ENCODE measurements at regions of chr1 and their contacts with region 1.

Region 1: GRCh38 chr1:69737527-69738185 is 169.9 kb downstream of the LRRC7 start:
- H3K4me3 Mint-ChIP-seq: no peak overlapping the region
- H3K27ac Mint-ChIP-seq: no peak overlapping the region
- H3K4me1 Mint-ChIP-seq: no peaks in the 10 kb centered on the region
- H3K27me3 Mint-ChIP-seq: no peaks in the 10 kb centered on the region

Region 2: DNA sequence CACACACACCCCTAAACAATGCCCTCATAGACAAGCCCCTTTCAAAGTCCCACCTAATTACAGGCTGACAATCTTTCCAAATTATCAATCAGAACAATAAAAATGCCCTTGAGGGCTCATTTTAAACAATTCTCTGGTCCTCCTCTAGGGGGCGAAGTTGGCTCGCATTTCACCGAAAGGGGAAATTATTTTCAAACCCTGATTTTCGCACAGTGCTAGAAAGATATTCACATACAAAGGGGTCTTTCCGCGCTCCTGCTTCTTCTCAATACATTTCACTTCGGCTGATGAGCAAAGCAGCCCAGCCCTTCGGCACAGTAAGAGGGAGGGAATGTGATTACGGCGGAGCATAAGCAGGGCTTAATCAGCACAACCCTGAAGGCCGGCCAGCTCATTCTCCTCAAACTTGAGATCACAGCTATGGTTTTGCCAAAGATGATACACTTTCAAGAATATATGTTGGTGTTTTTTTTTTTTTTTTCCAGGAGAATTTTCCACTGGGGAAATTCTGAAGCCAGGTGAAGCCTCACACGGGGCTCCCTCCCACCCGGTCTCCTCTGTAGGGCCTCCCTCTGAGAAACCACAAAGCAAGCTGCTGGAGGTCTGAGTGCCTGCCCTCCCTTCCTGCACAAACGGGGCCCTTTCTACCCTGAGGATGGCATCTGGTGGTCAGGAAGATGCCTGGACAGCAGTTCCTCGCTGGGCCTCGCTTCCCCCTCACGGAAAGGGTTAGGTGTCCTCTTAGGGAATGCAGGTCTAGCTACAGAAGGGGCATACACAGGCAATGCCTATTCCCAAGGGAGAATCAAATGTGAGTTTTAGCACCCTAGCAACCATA is 1971.3 kb before region 1 on chr1:
- intact Hi-C with region 1: loop called (anchors 5 kb)
- H3K4me3 Mint-ChIP-seq: peak overlapping the region; percentile 47
- H3K27ac Mint-ChIP-seq: no peak overlapping the region
- H3K4me1 Mint-ChIP-seq: peaks cover 11% of the 10 kb centered on the region
- H3K27me3 Mint-ChIP-seq: peaks cover 28% of the 10 kb centered on the region

Region 3: GRCh38 chr1:67853704-67854103 is 1884.0 kb before region 1 on chr1:
- intact Hi-C with region 1: loop called (anchors 2 kb)
- H3K4me3 Mint-ChIP-seq: no peak overlapping the region
- H3K27ac Mint-ChIP-seq: no peak overlapping the region
- H3K4me1 Mint-ChIP-seq: peaks cover 5% of the 10 kb centered on the region
- H3K27me3 Mint-ChIP-seq: peaks cover 11% of the 10 kb centered on the region

Region 4: DNA sequence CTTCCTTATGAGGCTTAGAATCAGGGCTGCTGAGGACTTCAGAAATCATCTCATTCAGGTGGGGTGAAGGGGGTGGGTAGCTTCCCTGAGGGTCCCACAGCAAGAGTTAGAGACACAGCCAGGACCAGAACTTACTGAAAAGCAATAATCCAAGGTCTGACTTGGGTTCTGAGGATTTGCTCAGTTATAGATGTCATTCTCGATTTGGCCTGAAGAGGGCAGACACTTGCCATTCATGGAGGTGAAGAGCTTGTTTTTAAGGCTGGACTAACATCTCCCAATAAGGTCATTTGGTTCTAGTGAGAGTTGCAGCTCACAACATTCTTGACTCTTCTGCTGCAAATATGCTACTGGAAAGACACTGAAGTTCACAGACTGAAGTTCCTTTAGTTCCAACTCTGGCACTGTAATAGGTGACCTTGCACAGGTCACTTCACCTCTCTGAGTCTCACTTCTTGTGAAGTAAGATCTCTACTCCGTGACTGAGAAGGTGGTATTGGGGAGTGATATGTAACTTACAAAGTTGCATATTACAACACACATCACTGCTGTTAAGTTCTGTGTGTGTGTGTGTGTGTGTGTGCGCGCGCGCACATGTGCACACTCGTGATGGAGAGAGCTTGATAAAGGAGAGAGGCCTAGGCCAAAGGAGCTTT is 1617.4 kb before region 1 on chr1:
- intact Hi-C with region 1: loop called (anchors 1 kb)
- H3K4me3 Mint-ChIP-seq: no peak overlapping the region
- H3K27ac Mint-ChIP-seq: no peak overlapping the region
- H3K4me1 Mint-ChIP-seq: peaks cover 7% of the 10 kb centered on the region
- H3K27me3 Mint-ChIP-seq: no peaks in the 10 kb centered on the region

Region 5: DNA sequence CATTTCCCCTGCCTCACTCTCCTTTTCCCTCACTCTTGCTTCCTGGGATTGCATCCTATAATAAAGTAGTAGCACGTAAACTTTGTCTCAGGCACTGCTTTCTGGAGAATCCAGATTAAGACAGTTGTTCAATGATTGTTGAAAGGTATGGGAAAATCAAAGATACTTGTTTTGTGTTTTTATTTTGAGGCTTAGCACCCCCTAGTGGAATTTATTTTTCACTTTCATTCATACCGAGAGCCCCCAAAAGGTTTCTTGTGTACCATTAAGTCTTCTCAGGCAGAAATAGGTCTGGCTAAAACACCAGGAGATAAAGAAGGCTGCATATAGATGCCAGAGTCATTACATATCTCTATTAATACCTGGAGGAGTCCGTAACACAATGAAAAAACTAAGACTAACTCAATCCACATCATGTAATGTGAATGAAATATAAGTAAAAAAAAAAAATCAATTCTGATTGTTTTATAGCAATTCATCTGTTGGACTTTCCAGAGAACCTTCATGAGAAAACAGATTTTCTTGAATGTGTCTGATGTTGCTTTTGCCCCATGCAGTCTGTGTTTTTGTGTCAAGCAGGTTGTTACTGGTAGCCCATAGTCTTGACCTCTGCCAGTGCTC is 1391.4 kb before region 1 on chr1:
- intact Hi-C with region 1: loop called (anchors 10 kb)
- H3K4me3 Mint-ChIP-seq: no peak overlapping the region
- H3K27ac Mint-ChIP-seq: no peak overlapping the region
- H3K4me1 Mint-ChIP-seq: peaks cover 29% of the 10 kb centered on the region
- H3K27me3 Mint-ChIP-seq: no peaks in the 10 kb centered on the region

Region 6: GRCh38 chr1:68600049-68600661 is 1137.5 kb before region 1 on chr1:
- intact Hi-C with region 1: loop called (anchors 5 kb)
- H3K4me3 Mint-ChIP-seq: no peak overlapping the region
- H3K27ac Mint-ChIP-seq: no peak overlapping the region
- H3K4me1 Mint-ChIP-seq: no peaks in the 10 kb centered on the region
- H3K27me3 Mint-ChIP-seq: no peaks in the 10 kb centered on the region

Region 7: GRCh38 chr1:69648486-69648885 is 89.2 kb before region 1 on chr1:
- intact Hi-C with region 1: no loop called
- H3K4me3 Mint-ChIP-seq: no peak overlapping the region
- H3K27ac Mint-ChIP-seq: no peak overlapping the region
- H3K4me1 Mint-ChIP-seq: no peaks in the 10 kb centered on the region
- H3K27me3 Mint-ChIP-seq: no peaks in the 10 kb centered on the region

Region 8: DNA sequence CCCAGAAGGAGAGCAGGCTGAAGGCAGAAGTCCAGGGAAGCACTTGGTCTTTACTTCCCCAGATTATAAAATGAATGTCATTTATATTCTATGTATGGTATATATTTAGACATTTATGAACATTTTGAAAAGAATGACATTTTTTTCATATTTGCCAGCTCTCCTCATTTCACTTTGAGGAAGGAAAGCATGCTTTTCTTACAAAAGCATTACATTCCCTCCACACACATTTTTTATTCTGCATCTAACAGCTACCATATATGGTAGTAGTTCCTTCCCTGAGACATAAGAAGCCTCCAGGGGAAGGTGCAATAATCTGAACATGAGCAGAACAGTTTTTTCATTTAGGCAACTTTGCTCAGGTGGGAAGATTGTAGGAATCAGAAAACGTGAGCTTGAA is 76.0 kb before region 1 on chr1:
- intact Hi-C with region 1: no loop called
- H3K4me3 Mint-ChIP-seq: no peak overlapping the region
- H3K27ac Mint-ChIP-seq: no peak overlapping the region
- H3K4me1 Mint-ChIP-seq: peaks cover 7% of the 10 kb centered on the region
- H3K27me3 Mint-ChIP-seq: no peaks in the 10 kb centered on the region

Region 9: DNA sequence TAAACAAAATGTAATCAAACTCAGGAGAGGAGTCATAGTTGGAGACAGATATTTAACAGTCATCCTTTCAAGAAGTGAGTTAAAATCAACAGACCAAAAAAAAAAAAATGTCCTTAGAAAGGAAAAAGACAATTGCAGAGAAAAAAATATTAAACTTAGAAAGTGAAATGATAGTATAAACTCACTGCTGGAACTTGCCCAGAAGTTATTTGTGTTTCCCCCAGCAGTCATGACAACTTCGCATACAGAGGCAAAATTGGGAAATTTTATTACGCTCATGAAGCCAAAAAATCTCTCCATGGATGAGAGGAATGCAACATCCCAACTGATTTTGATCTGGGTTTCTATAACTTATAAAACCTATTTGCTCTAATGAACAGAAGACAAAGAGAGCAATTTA is 28.3 kb after region 1 on chr1:
- intact Hi-C with region 1: no loop called
- H3K4me3 Mint-ChIP-seq: no peak overlapping the region
- H3K27ac Mint-ChIP-seq: no peak overlapping the region
- H3K4me1 Mint-ChIP-seq: no peaks in the 10 kb centered on the region
- H3K27me3 Mint-ChIP-seq: no peaks in the 10 kb centered on the region

Region 10: DNA sequence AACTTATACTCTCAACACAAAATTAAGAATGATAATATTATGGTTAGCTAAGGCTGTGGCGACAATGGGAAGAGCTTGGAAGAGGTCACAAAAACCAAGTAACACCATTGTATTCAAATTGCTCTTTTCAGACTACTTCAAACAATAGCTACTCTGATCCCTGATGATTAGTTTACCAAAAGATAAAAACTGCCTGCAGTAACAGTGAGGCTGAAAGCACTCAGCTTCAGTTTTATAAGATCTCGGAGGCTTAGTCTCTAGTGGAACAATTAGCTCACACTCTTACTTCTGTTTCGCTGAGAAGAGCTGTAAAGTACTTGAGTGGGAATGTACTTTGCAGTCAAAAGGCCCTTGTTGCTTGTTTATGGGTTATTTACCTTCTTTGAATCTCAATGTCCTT is 108.6 kb after region 1 on chr1:
- intact Hi-C with region 1: no loop called
- H3K4me3 Mint-ChIP-seq: no peak overlapping the region
- H3K27ac Mint-ChIP-seq: no peak overlapping the region
- H3K4me1 Mint-ChIP-seq: no peaks in the 10 kb centered on the region
- H3K27me3 Mint-ChIP-seq: no peaks in the 10 kb centered on the region

Measured in dendritic cell treated with granulocyte-macrophage colony-stimulating factor and Interleukin-4, amounts not matched to agents 40 ng/mL and 50 ng/mL, for 4 days (primary cell).